Ovary (tissue), 10 donors: ENCODE measurements at regions of chr10 and their contacts with region 1.

Region 1: DNA sequence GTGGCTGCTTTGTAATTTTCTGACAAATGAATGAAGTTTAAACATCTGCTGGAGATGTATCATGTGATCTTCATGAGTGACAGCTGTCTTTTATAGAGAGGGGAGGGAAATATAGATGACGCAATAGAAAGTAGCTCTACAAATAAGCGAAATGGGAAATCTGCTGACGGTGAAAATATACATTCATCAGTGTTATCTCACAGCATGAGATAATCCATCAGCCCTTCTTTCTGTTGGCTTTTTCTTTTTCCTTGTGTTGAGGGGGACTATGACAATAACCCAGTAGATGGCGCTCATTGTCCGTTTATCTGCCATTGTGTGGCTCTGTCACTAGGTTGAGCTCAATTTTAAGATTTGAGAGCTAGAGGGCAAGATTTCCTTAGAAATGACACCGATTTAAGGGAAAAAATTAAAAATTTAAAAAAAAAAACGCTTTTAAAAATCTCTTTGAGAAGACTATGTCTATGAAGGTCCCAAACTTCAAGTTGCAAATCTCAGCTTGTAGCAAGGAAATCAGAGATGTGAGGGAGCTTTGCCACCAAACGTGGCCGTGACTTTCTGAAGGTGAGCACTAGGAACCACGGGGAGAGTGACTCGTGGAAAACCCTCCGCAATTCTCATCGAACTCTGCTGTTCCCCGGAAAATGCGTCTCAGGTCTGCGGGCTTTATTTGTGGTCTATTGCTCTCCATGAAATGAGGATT is 114.6 kb upstream of the SFMBT2 start:
- DNase-seq: peak in 4 of 5 donors; percentile 49 to 76 (median 61)
- H3K4me3 ChIP-seq: no peak overlapping the region
- H3K27ac ChIP-seq: no peak overlapping the region
- H3K4me1 ChIP-seq: no peaks in the 10 kb centered on the region
- H3K27me3 ChIP-seq: no peaks in the 10 kb centered on the region
- CTCF ChIP-seq: peak; percentile 41 to 91 (median 86)
- EP300 ChIP-seq: no peak
- POLR2A ChIP-seq: no peak

Region 2: GRCh38 chr10:7445474-7446185 is 79.8 kb before region 1 on chr10:
- intact Hi-C with region 1: no loop called
- DNase-seq: no peak
- H3K4me3 ChIP-seq: no peak overlapping the region
- H3K27ac ChIP-seq: no peak overlapping the region
- H3K4me1 ChIP-seq: no peaks in the 10 kb centered on the region
- H3K27me3 ChIP-seq: no peaks in the 10 kb centered on the region
- CTCF ChIP-seq: no peak
- EP300 ChIP-seq: no peak
- POLR2A ChIP-seq: no peak

Region 3: GRCh38 chr10:7687228-7687907 is 161.9 kb after region 1 on chr10:
- intact Hi-C with region 1: loop called (anchors 2 to 5 kb)
- DNase-seq: peak; percentile 80 to 89 (median 83)
- H3K4me3 ChIP-seq: no peak overlapping the region
- H3K27ac ChIP-seq: no peak overlapping the region
- H3K4me1 ChIP-seq: no peaks in the 10 kb centered on the region
- H3K27me3 ChIP-seq: no peaks in the 10 kb centered on the region
- CTCF ChIP-seq: peak; percentile 86 to 90 (median 88)
- EP300 ChIP-seq: no peak
- POLR2A ChIP-seq: no peak

Region 4: GRCh38 chr10:7818295-7819122 is 293.0 kb after region 1 on chr10 and contains the start of gene TAF3:
- intact Hi-C with region 1: loop called in 1 of 4 experiments (anchors 10 kb)
- DNase-seq: peak; percentile 87 to 94 (median 91)
- H3K4me3 ChIP-seq: peak within 1 kb of the TSS; percentile 65
- H3K27ac ChIP-seq: peak within 1 kb of the TSS; percentile 39 to 53
- H3K4me1 ChIP-seq: peaks cover 1% of the 10 kb centered on the region
- H3K27me3 ChIP-seq: no peaks in the 10 kb centered on the region
- CTCF ChIP-seq: no peak
- EP300 ChIP-seq: no peak
- POLR2A ChIP-seq: no peak
- total RNA-seq, gene TAF3: 8.0 to 13.7 (median 11.8) TPM